Pancreas (tissue), 10 donors: ENCODE measurements at regions of chr1 and their contacts with region 1.

Region 1: GRCh38 chr1:147748676-147749350 is 11.6 kb downstream of the GJA5 start:
- DNase-seq: no peak
- ATAC-seq: no peak
- H3K4me3 ChIP-seq: no peak overlapping the region
- H3K27ac ChIP-seq: no peak overlapping the region
- H3K4me1 ChIP-seq: no peaks in the 10 kb centered on the region
- H3K27me3 ChIP-seq: no peaks in the 10 kb centered on the region
- CTCF ChIP-seq: no peak

Region 2: DNA sequence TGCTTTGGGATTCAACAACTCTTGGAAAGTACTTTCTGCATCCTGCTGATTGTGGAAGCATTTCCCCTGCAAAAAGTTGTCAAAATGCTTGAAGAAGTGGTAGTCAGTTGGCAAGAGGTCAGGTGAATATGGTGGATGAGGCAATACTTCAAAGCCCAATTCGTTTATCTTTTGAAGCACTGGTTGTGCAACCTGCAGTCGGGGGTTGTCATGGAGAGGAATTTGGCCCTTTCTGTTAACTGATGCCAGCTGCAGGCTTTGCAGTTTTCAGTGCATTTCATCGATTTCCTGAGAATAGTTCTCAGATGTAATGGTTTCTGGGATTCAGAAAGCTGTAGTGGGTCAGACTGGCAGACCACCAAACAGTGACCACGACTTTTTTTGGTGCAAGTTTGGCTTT is 59.2 kb after region 1 on chr1:
- intact Hi-C with region 1: loop called in 1 of 3 experiments (anchors 10 kb)
- DNase-seq: no peak
- ATAC-seq: no peak
- H3K4me3 ChIP-seq: no peak overlapping the region
- H3K27ac ChIP-seq: no peak overlapping the region
- H3K4me1 ChIP-seq: no peaks in the 10 kb centered on the region
- H3K27me3 ChIP-seq: no peaks in the 10 kb centered on the region
- CTCF ChIP-seq: no peak

Region 3: DNA sequence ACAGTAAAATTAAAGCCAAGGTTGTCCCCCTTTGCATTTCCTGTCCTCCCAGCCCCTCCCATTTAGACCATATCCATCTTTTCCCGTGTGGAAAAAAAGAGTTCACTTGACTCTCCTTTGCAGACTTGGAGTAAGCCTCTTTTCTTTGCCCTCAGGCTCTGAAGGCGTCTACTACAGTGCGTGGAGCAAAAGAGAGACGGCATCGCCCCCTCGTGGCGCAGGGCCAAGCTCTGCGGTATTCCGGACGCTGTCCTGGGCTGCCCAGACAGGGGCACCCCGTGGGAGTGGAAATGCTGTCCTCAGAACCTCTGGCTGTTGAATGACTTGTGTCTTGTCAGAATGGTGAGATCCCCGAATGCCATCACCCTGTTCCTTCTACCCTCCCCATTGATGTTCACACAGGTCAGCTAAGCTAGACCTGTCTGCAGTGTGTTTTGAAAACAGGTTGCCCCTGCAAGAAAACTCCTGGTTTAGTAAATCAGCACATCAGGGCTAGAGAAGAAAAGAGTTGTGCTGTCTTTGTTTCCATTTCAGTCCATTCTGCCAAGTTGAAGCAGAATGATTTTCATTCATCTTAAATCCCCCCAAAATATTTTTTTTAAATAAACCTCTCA is 141.5 kb after region 1 on chr1:
- intact Hi-C with region 1: no loop called
- DNase-seq: peak in 5 of 6 donors; percentile 26 to 82 (median 33)
- ATAC-seq: peak in 3 of 4 donors; percentile 79 to 90 (median 83)
- H3K4me3 ChIP-seq: no peak overlapping the region
- H3K27ac ChIP-seq: no peak overlapping the region
- H3K4me1 ChIP-seq: no peaks in the 10 kb centered on the region
- H3K27me3 ChIP-seq: no peaks in the 10 kb centered on the region
- CTCF ChIP-seq: peak in 1 of 4 donors; percentile 23